Mammary epithelial cell (primary cell): ENCODE measurements at regions of chr9 and their contacts with region 1.

Region 1: GRCh38 chr9:130866474-130866965 is 30.1 kb downstream of the QRFP start:
- DNase-seq: peak; percentile 87
- H3K4me3 ChIP-seq: peak overlapping the region in 1 of 3 experiments; percentile 43
- H3K27ac ChIP-seq: no peak overlapping the region
- H3K4me1 ChIP-seq: peaks cover 4% of the 10 kb centered on the region
- H3K27me3 ChIP-seq: no peaks in the 10 kb centered on the region
- CTCF ChIP-seq: peak; percentile 96 to 99

Region 2: GRCh38 chr9:130707225-130707976 is 159.1 kb before region 1 on chr9:
- CTCF ChIA-PET with region 1: no interaction called
- dilution Hi-C with region 1: no loop called
- in situ Hi-C with region 1: loop called in 1 of 2 experiments (anchors 5 kb)
- intact Hi-C with region 1: loop called (anchors 1 kb)
- DNase-seq: peak; percentile 32
- H3K4me3 ChIP-seq: no peak overlapping the region
- H3K27ac ChIP-seq: no peak overlapping the region
- H3K4me1 ChIP-seq: no peaks in the 10 kb centered on the region
- H3K27me3 ChIP-seq: no peaks in the 10 kb centered on the region
- CTCF ChIP-seq: peak; percentile 65 to 66

Region 3: DNA sequence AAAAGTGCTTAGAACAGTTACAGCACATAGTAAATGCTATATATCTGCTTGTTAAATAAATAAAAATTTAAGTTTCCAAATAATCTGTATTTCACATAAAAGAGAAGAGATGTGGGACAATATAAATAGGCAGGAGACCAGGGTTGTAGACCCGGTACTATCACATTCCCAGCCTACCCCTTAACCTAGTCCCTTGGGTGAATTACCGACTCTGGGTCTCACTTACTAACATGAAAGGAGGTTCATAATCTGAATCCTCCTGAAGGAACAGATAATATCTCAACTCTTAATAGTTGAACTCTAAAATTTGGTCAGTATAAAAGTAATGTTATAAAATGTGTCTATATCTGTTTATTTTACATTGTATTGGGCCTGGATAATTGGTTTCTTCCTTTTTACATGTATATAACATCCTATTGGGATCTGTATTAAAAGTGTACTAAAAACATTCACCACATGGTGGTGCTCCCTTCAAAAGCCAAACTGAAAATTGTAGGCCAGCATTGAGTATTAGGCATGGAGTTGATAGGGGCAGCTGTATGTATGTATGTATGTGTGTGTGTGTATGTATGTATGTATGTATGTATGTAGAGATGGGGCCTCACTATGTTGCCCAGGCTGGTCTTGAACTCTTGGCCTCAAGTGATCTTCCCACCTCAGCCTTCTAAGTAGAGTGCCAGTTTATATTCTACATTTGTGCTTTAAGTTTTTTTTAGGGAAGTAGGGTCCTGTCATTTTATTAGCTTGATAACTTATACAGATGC is 95.7 kb before region 1 on chr9:
- CTCF ChIA-PET with region 1: interaction called, 6 read pairs
- dilution Hi-C with region 1: no loop called
- in situ Hi-C with region 1: loop called (anchors 5 kb)
- intact Hi-C with region 1: loop called (anchors 1 kb)
- DNase-seq: peak; percentile 47
- H3K4me3 ChIP-seq: no peak overlapping the region
- H3K27ac ChIP-seq: no peak overlapping the region
- H3K4me1 ChIP-seq: peaks cover 10% of the 10 kb centered on the region
- H3K27me3 ChIP-seq: no peaks in the 10 kb centered on the region
- CTCF ChIP-seq: peak; percentile 45 to 60

Region 4: GRCh38 chr9:131608493-131609037 is 742.0 kb after region 1 on chr9:
- CTCF ChIA-PET with region 1: no interaction called
- dilution Hi-C with region 1: no loop called
- in situ Hi-C with region 1: no loop called
- intact Hi-C with region 1: no loop called
- DNase-seq: peak; percentile 81
- H3K4me3 ChIP-seq: peak overlapping the region in 1 of 3 experiments; percentile 11
- H3K27ac ChIP-seq: peak overlapping the region; percentile 59
- H3K4me1 ChIP-seq: peaks cover 36% of the 10 kb centered on the region
- H3K27me3 ChIP-seq: no peaks in the 10 kb centered on the region
- CTCF ChIP-seq: no peak